ENCODE measurements at regions of chr2 and their contacts with region 1.

Region 1: DNA sequence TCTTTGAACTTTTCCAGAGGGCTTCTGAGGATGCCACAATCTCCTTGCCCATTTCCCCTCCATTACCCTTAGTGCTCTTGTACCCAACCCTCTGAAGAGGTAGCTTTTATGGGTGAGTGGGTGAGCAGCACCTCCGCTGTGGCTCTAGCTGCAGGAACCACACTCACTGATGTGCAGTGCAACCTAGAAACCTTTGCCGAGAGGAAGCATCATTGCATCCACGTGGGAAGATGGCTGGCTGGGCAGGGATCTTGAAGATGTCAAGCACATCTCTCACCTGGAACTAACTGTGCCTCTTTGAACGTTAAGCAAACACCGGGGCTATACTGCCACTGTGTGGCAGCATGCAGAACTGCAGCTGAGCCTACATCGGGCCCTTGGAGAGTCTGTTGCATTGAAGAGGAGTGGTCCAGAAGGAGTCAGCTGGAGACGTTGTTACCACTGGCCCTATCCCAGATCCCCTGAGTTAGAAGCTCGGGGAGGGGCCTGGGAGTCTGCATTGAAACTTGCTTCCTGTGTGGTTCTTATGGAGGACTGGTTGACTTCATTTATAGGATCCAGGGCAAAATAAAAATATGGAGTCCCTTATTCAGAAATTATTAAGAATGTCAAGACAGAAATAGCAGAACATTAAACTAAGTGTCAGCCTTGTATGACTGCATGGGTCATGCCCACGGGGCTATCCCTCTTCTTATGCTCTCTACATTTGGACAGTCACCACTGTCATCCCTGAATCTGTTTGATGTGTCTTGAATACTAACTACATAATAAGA is 28.7 kb downstream of the IGFBP5 start:
- DNase-seq: peak; percentile 89
- ATAC-seq: peak; percentile 66
- H3K4me3 Mint-ChIP-seq: no peak overlapping the region
- H3K27ac Mint-ChIP-seq: no peak overlapping the region
- H3K4me1 Mint-ChIP-seq: peaks cover 42% of the 10 kb centered on the region
- H3K27me3 Mint-ChIP-seq: no peaks in the 10 kb centered on the region
- CTCF ChIP-seq: peak; percentile 96

Region 2: GRCh38 chr2:216222650-216223352 is 443.8 kb before region 1 on chr2:
- CTCF ChIA-PET with region 1: interaction called, 13 read pairs
- POLR2A ChIA-PET with region 1: interaction called, 3 read pairs
- DNase-seq: peak; percentile 23
- ATAC-seq: peak; percentile 77
- H3K4me3 Mint-ChIP-seq: no peak overlapping the region
- H3K27ac Mint-ChIP-seq: no peak overlapping the region
- H3K4me1 Mint-ChIP-seq: no peaks in the 10 kb centered on the region; the same call in 1 of the 2 replicates
- H3K27me3 Mint-ChIP-seq: no peaks in the 10 kb centered on the region
- CTCF ChIP-seq: peak; percentile 15; the same call in 1 of the 2 replicates

Region 3: GRCh38 chr2:216632952-216633615 is 33.6 kb before region 1 on chr2 and contains the start of gene IGFBP2:
- CTCF ChIA-PET with region 1: interaction called, 15 read pairs
- POLR2A ChIA-PET with region 1: interaction called, 12 read pairs
- DNase-seq: peak; percentile 84
- ATAC-seq: peak; percentile 65
- H3K4me3 Mint-ChIP-seq: peak within 1 kb of the TSS; percentile 99
- H3K27ac Mint-ChIP-seq: peak within 1 kb of the TSS; percentile 97
- H3K4me1 Mint-ChIP-seq: peaks cover 56% of the 10 kb centered on the region
- H3K27me3 Mint-ChIP-seq: peaks cover 13% of the 10 kb centered on the region
- CTCF ChIP-seq: no peak
- total RNA-seq, gene IGFBP2: 514 to 873 TPM (median 854 TPM) in 3 replicates

Region 4: DNA sequence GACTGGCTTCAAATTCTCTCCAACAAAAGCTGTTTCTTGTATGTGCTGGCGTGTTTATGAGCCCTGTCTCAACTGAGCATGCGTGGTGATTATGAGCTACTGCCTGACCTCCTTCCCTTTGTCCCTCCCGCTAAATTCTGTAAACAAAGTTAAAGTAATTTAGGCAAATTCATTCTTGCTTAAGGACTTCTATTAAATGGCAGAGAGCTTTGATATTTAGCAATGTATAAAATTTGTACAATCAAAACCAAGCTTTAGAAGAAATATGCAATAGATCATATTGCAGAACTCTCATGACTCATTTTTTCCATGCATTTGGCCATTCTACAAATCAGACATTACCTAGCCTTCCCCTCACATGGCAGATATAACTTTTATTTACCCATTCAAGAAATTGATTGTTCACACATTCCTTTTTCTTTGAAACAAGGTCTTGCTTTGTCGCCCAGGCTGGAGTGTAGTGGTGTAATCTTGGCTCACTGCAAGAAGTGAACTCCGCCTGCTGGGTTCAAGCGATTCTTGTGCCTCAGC is 15.2 kb before region 1 on chr2:
- CTCF ChIA-PET with region 1: interaction called, 10 read pairs
- POLR2A ChIA-PET with region 1: interaction called, 5 read pairs
- DNase-seq: no peak
- ATAC-seq: no peak
- H3K4me3 Mint-ChIP-seq: no peak overlapping the region
- H3K27ac Mint-ChIP-seq: peak overlapping the region; percentile 24; the same call in 1 of the 2 replicates
- H3K4me1 Mint-ChIP-seq: peaks cover 75% of the 10 kb centered on the region
- H3K27me3 Mint-ChIP-seq: no peaks in the 10 kb centered on the region
- CTCF ChIP-seq: no peak

Region 5: DNA sequence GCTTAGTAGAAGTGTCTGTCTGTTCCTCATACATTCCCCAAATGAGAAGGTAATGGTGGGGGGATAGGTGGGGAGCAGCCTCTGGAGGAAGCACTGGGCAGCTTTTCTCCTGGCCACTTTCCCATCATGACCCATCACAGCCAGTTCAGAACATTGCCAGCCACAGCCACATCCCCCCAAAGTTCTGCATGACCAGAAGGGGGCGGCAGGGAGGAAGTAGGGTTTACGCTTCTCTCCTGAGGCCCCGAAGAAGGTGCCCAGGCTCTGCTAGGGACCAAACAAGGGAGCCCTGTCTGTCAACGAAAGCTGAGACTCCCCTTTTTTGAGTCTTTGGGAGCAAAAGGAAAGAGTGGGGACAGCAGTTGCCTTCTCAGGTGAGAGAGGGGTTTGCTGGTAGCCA is 21.0 kb after region 1 on chr2:
- CTCF ChIA-PET with region 1: interaction called, 13 read pairs
- POLR2A ChIA-PET with region 1: no interaction called
- DNase-seq: peak; percentile 84
- ATAC-seq: peak; percentile 67
- H3K4me3 Mint-ChIP-seq: no peak overlapping the region
- H3K27ac Mint-ChIP-seq: no peak overlapping the region
- H3K4me1 Mint-ChIP-seq: peaks cover 34% of the 10 kb centered on the region
- H3K27me3 Mint-ChIP-seq: peaks cover 24% of the 10 kb centered on the region
- CTCF ChIP-seq: peak; percentile 67

Region 6: DNA sequence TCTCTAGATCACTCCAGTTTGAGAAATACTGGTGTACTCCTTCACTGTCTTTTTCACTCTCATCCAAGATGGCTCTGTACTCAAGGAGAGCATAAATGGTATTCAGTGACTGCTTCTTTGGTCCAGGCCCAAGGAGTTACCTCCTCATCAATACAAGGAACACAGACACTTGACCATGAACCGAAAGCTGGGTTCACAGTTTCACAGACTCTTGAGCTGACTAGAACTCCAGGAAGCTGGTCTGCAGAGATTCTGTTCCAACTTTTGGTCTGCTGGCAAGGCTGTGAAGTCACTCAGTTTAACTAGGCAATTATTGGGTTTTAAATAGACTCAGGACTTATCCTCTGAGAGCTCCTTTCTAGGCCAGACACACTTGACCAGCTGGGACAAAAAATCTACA is 36.1 kb after region 1 on chr2:
- CTCF ChIA-PET with region 1: no interaction called
- POLR2A ChIA-PET with region 1: no interaction called
- DNase-seq: no peak
- ATAC-seq: no peak
- H3K4me3 Mint-ChIP-seq: no peak overlapping the region
- H3K27ac Mint-ChIP-seq: no peak overlapping the region
- H3K4me1 Mint-ChIP-seq: no peaks in the 10 kb centered on the region
- H3K27me3 Mint-ChIP-seq: no peaks in the 10 kb centered on the region
- CTCF ChIP-seq: no peak

Measured in WTC11 (cell line).